Cardiac septum (tissue), 1 donor: ENCODE measurements at regions of chr11 and their contacts with region 1.

Region 1: GRCh38 chr11:4610258-4610935 is 2.4 kb upstream of the TRIM68 start:
- DNase-seq: no peak

Region 2: GRCh38 chr11:4643076-4643475 is 32.7 kb after region 1 on chr11:
- intact Hi-C with region 1: loop called (anchors 2 kb)
- DNase-seq: no peak